ENCODE measurements at regions of chr6 and their contacts with region 1.

Region 1: GRCh38 chr6:27753668-27754407 is 158.4 kb downstream of the OR2B2 start:
- DNase-seq: peak; percentile 76
- ATAC-seq: peak; percentile 69
- H3K4me3 ChIP-seq: peak overlapping the region; percentile 58
- H3K27ac ChIP-seq: no peak overlapping the region
- H3K4me1 ChIP-seq: no peaks in the 10 kb centered on the region
- H3K27me3 ChIP-seq: peaks cover 7% of the 10 kb centered on the region
- CTCF ChIP-seq: no peak
- POLR2A ChIP-seq: no peak
- RAD21 ChIP-seq: no peak

Region 2: GRCh38 chr6:27157459-27158315 is 596.2 kb before region 1 on chr6:
- CTCF ChIA-PET with region 1: no interaction called
- POLR2A ChIA-PET with region 1: interaction called, 4 read pairs
- dilution Hi-C with region 1: no loop called
- in situ Hi-C with region 1: no loop called
- intact Hi-C with region 1: loop called (anchors 1 kb)
- DNase-seq: peak; percentile 77
- ATAC-seq: peak; percentile 86
- H3K4me3 ChIP-seq: peak overlapping the region; percentile 49
- H3K27ac ChIP-seq: no peak overlapping the region
- H3K4me1 ChIP-seq: no peaks in the 10 kb centered on the region
- H3K27me3 ChIP-seq: no peaks in the 10 kb centered on the region
- CTCF ChIP-seq: peak; percentile 50
- POLR2A ChIP-seq: no peak
- RAD21 ChIP-seq: peak; percentile 38

Region 3: DNA sequence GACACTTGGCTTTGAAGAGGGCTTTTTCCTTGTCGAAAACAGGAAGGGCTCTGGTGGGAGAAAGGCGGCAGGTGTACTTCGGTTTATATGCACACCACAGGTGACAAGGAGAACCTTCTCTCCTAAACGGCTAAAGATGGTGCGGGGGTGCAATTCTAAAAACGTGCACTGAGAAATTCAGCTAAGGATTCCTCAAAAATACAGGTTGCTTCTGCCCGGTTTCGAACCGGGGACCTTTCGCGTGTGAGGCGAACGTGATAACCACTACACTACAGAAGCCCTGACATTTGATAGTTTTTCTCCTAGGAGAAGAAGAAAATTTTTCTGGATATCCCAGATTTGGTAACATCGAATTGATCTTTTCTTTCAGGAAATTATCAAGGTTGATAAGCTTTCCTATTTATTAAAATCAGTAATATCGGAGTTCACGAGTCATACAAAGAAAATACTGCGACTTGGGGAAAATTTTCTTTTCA is 473.7 kb before region 1 on chr6:
- CTCF ChIA-PET with region 1: no interaction called
- POLR2A ChIA-PET with region 1: no interaction called
- dilution Hi-C with region 1: no loop called
- in situ Hi-C with region 1: no loop called
- intact Hi-C with region 1: loop called (anchors 5 kb)
- DNase-seq: peak; percentile 53
- ATAC-seq: peak; percentile 94
- H3K4me3 ChIP-seq: peak overlapping the region; percentile 27
- H3K27ac ChIP-seq: no peak overlapping the region
- H3K4me1 ChIP-seq: no peaks in the 10 kb centered on the region
- H3K27me3 ChIP-seq: peaks cover 27% of the 10 kb centered on the region
- CTCF ChIP-seq: no peak
- POLR2A ChIP-seq: no peak
- RAD21 ChIP-seq: no peak

Region 4: GRCh38 chr6:27472617-27473400 is 281.0 kb before region 1 on chr6 and contains the start of gene ZNF184:
- CTCF ChIA-PET with region 1: no interaction called
- POLR2A ChIA-PET with region 1: interaction called, 3 read pairs
- dilution Hi-C with region 1: no loop called
- in situ Hi-C with region 1: no loop called
- intact Hi-C with region 1: loop called (anchors 5 kb)
- DNase-seq: peak; percentile 98
- ATAC-seq: peak; percentile 96
- H3K4me3 ChIP-seq: peak within 1 kb of the TSS; percentile 60
- H3K27ac ChIP-seq: peak within 1 kb of the TSS; percentile 74
- H3K4me1 ChIP-seq: no peaks in the 10 kb centered on the region
- H3K27me3 ChIP-seq: no peaks in the 10 kb centered on the region
- CTCF ChIP-seq: no peak; the same call in 1 of the 2 replicates
- POLR2A ChIP-seq: peak; percentile 82
- RAD21 ChIP-seq: no peak
- total RNA-seq, gene ZNF184: 8.1 and 10.6 TPM in 2 replicates

Region 5: DNA sequence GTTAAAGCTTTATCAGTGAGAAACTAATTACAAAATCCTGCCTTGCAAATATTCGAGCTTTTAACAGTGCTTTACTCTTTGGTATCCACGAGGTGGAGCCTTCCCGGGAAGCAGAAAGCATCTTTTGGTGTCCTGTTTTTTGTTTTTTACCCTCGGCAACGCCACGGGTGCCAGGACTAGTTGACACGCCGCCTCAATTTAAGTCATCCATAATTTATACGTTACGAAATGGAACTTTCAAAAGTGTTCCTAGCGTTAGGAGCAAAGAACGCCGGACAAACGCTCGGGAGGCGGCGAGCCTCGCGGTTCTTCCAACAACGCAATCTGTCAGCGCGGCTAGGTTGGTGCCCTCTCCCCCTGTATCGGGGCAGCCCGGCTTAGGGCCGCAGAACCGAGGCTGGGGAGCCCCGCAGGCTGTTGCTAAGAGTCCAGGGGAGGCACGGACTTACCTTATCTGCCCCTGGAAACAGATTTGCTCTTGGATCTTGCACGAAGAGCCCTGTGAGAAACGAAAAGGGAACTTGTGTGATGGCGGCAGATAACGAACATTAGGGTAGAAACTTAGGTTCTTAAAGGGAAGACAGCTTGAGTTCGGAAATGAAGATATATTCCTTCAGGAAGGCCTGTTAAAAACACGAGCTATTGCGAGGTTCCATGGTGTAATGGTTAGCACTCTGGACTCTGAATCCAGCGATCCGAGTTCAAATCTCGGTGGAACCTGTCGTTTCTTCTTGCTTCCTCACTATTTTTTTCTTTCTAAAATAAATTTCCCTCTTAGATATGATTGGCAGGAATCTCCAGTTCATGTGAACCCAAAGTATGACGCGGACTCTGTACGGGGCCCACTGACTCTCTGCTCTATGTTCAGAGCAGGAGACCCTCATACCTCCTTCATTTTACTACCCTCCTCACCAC is 234.7 kb before region 1 on chr6:
- CTCF ChIA-PET with region 1: interaction called, 6 read pairs
- POLR2A ChIA-PET with region 1: no interaction called
- dilution Hi-C with region 1: no loop called
- in situ Hi-C with region 1: loop called (anchors 5 kb)
- intact Hi-C with region 1: loop called (anchors 1 kb)
- DNase-seq: peak; percentile 90
- ATAC-seq: peak; percentile 87
- H3K4me3 ChIP-seq: peak overlapping the region; percentile 74
- H3K27ac ChIP-seq: peak overlapping the region; percentile 76
- H3K4me1 ChIP-seq: peaks cover 2% of the 10 kb centered on the region; the same call in 1 of the 2 replicates
- H3K27me3 ChIP-seq: peaks cover 2% of the 10 kb centered on the region
- CTCF ChIP-seq: peak; percentile 72
- POLR2A ChIP-seq: no peak
- RAD21 ChIP-seq: peak; percentile 55

Region 6: DNA sequence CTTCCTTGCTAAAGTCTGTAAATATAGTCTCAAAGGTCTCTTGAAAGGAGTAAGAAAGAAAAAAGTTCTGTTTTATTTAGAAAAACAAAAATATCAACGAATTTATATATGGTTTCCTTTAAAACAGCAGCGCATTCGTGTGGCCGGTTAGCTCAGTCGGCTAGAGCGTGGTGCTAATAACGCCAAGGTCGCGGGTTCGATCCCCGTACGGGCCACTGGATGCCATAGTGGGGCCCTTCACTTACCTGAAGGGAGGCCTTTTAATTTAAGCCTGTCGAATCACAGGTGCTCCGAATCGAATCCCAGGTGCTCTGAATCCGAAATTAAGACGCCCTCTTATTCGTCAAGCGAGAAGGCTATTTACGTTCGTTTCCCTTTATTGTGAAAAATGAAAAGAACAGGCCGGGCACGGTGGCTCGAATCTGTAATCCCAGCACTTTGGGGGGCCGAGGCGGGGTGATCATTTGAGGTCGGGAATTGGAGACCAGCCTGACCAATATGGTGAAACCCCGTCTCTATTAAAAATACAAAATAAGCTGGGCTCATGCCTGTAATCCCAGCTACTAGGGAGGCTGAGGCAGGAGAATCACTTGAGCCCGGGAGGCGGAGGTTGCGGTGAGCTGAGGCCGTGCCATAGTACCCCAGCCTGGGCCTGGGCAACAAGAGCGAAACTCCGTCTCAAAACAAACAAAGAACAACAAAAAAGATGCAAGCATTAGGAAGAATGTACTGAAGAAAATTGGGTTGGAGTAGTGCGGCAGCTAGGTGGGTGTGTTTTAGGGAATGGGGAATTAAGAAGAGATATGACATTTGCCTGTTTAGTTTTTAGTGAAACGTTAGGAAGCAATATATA is 85.2 kb before region 1 on chr6:
- CTCF ChIA-PET with region 1: no interaction called
- POLR2A ChIA-PET with region 1: no interaction called
- dilution Hi-C with region 1: no loop called
- in situ Hi-C with region 1: no loop called
- intact Hi-C with region 1: loop called (anchors 5 kb)
- DNase-seq: peak; percentile 77
- ATAC-seq: peak; percentile 74
- H3K4me3 ChIP-seq: no peak overlapping the region; the same call in 1 of the 2 replicates
- H3K27ac ChIP-seq: no peak overlapping the region
- H3K4me1 ChIP-seq: peaks cover 1% of the 10 kb centered on the region; the same call in 1 of the 2 replicates
- H3K27me3 ChIP-seq: no peaks in the 10 kb centered on the region
- CTCF ChIP-seq: no peak
- POLR2A ChIP-seq: no peak
- RAD21 ChIP-seq: no peak

Region 7: DNA sequence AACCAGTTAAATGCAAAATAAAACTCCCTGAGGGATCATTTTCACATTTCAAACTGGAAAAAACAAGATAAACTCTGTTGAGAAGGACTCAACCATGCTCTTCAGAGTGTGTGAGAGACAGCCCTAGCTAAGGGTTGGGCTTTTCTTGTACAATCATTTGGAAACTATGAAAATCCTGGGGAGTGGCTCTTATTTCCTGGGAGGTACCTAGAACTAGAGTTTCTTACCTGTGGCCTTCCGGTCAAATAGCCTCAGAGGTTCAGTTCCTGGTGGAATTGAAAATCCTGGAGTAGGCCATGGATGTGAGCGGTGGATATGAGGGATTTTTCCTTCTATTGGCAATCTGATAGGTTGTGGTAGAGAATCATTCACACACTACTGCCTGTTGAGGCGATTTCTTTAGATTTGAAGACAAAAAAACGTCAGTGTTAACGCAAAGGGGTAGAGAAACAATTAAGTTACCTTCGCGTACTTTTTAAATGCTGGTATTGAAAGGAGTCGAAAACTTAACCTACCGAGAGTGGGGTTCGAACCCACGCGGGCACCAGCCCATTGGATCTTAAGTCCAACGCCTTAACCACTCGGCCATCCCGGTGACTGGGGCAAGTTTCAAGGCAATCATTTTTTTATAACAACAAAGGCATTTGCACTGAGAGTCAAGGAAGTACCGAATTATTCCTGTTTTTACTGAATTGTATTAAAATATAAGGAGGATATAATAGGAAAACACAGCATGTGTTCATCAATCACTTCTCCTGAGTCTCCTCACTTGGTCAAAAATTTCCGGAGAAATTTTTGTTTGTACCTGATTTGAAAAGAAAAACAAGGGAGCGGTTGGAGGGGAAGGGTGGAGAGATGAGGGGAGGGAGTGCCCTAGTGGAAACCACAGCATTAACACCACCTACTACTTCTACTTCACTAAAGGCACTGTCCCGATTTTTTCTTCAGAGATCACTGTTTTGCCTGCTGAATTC is 32.9 kb before region 1 on chr6:
- CTCF ChIA-PET with region 1: no interaction called
- POLR2A ChIA-PET with region 1: no interaction called
- dilution Hi-C with region 1: no loop called
- in situ Hi-C with region 1: no loop called
- intact Hi-C with region 1: no loop called
- DNase-seq: peak; percentile 24
- ATAC-seq: peak; percentile 70
- H3K4me3 ChIP-seq: no peak overlapping the region
- H3K27ac ChIP-seq: no peak overlapping the region
- H3K4me1 ChIP-seq: no peaks in the 10 kb centered on the region
- H3K27me3 ChIP-seq: no peaks in the 10 kb centered on the region
- CTCF ChIP-seq: no peak
- POLR2A ChIP-seq: no peak
- RAD21 ChIP-seq: no peak

Region 8: GRCh38 chr6:27743818-27744217 is 10.0 kb before region 1 on chr6:
- CTCF ChIA-PET with region 1: interaction called, 22 read pairs
- POLR2A ChIA-PET with region 1: no interaction called
- dilution Hi-C with region 1: no loop called
- in situ Hi-C with region 1: no loop called
- intact Hi-C with region 1: no loop called
- DNase-seq: no peak
- ATAC-seq: no peak
- H3K4me3 ChIP-seq: no peak overlapping the region
- H3K27ac ChIP-seq: no peak overlapping the region
- H3K4me1 ChIP-seq: no peaks in the 10 kb centered on the region
- H3K27me3 ChIP-seq: no peaks in the 10 kb centered on the region; the same call in 1 of the 2 replicates
- CTCF ChIP-seq: no peak
- POLR2A ChIP-seq: no peak
- RAD21 ChIP-seq: no peak

Region 9: GRCh38 chr6:29171736-29172135 is 1417.9 kb after region 1 on chr6:
- CTCF ChIA-PET with region 1: no interaction called
- POLR2A ChIA-PET with region 1: no interaction called
- dilution Hi-C with region 1: no loop called
- in situ Hi-C with region 1: no loop called
- intact Hi-C with region 1: no loop called
- DNase-seq: no peak
- ATAC-seq: no peak
- H3K4me3 ChIP-seq: no peak overlapping the region
- H3K27ac ChIP-seq: no peak overlapping the region
- H3K4me1 ChIP-seq: no peaks in the 10 kb centered on the region
- H3K27me3 ChIP-seq: no peaks in the 10 kb centered on the region
- CTCF ChIP-seq: no peak
- POLR2A ChIP-seq: no peak
- RAD21 ChIP-seq: no peak